ENCODE measurements at regions of chr2 and their contacts with region 1.

Region 1: GRCh38 chr2:143150287-143150686 is 21.1 kb downstream of the ARHGAP15 start:
- DNase-seq: peak in 1 of 35 experiments; percentile 38
- ATAC-seq: peak; percentile 54 to 69 (median 66)
- H3K4me3 ChIP-seq: no peak overlapping the region
- H3K4me3 Mint-ChIP-seq: peak overlapping the region; percentile 25 to 60 (median 57)
- H3K27ac ChIP-seq: peak overlapping the region; percentile 53
- H3K27ac Mint-ChIP-seq: peak overlapping the region; percentile 87 to 95
- H3K4me1 ChIP-seq: peaks cover 41 to 63% of the 10 kb centered on the region in 2 experiments
- H3K4me1 Mint-ChIP-seq: peaks cover 87 to 95% (median 89%) of the 10 kb centered on the region in 3 donors
- H3K27me3 ChIP-seq: no peaks in the 10 kb centered on the region
- H3K27me3 Mint-ChIP-seq: no peaks in the 10 kb centered on the region

Region 2: GRCh38 chr2:142849816-142850215 is 300.5 kb before region 1 on chr2:
- CTCF ChIA-PET with region 1: no interaction called
- POLR2A ChIA-PET with region 1: no interaction called
- DNase-seq: no peak
- ATAC-seq: no peak
- H3K4me3 ChIP-seq: no peak overlapping the region
- H3K4me3 Mint-ChIP-seq: no peak overlapping the region
- H3K27ac ChIP-seq: no peak overlapping the region
- H3K27ac Mint-ChIP-seq: no peak overlapping the region
- H3K4me1 ChIP-seq: no peaks in the 10 kb centered on the region
- H3K4me1 Mint-ChIP-seq: no peaks in the 10 kb centered on the region
- H3K27me3 ChIP-seq: no peaks in the 10 kb centered on the region
- H3K27me3 Mint-ChIP-seq: no peaks in the 10 kb centered on the region

Region 3: DNA sequence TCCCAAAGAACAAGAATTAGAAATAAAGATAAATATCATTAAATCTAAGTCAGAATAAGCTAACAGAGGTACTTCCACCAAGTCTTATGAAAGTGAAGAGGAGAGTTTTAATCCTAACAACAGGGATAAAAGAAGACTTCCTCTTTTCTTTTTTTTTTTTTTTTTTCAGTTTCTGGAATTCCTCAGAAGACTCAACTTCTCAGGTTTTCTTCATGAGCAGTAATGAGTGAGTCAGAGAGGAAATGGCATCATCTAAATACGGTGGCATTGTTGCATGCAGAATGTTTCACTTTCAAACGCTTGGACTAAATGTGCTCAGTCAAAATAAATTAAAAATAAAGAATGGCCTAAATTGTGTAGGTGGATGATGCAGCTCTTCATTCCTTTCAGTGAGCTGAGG is 66.7 kb before region 1 on chr2:
- CTCF ChIA-PET with region 1: no interaction called
- POLR2A ChIA-PET with region 1: no interaction called
- DNase-seq: peak in 1 of 35 experiments; percentile 27
- ATAC-seq: peak in 3 of 4 experiments; percentile 37 to 66 (median 51)
- H3K4me3 ChIP-seq: no peak overlapping the region
- H3K4me3 Mint-ChIP-seq: peak overlapping the region in 1 of 3 donors; percentile 10
- H3K27ac ChIP-seq: no peak overlapping the region
- H3K27ac Mint-ChIP-seq: peak overlapping the region in 1 of 2 donors; percentile 25
- H3K4me1 ChIP-seq: no peaks in the 10 kb centered on the region
- H3K4me1 Mint-ChIP-seq: peaks cover 4 to 25% (median 18%) of the 10 kb centered on the region in 3 donors
- H3K27me3 ChIP-seq: no peaks in the 10 kb centered on the region
- H3K27me3 Mint-ChIP-seq: no peaks in the 10 kb centered on the region

Region 4: DNA sequence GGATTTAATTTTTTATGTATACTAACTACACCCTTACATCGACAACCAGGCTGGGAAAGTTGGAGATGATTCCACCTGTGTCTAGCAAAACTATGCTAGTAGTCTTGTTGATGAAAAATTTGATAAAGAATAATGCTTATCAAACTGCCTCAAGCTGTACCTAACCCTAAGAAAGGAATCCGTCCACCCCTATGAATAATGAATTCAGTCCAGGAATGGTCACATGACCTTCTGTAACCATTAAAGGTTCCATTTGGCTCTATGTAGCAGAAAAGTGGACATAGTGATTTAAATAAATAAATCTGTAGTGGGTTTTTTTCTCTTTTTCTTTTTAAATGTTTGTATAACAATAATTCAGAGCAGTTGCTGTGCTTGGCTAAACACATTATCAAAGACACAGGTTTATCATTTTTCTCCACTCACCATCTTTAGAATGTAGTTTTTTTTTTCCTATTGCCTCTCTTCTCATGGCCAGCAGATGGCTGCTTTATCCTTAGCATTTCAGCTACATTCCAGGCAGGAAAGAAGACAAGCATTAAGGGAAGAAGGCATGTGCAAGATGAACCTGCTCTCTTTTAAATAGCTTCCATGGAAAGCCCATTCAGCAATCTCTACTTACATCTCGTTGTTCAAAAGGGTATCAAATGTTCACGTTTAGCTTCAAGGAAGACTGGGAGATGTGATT is 21.4 kb after region 1 on chr2:
- CTCF ChIA-PET with region 1: interaction called in 1 of 2 experiments, 13 read pairs
- POLR2A ChIA-PET with region 1: no interaction called
- DNase-seq: no peak
- ATAC-seq: no peak
- H3K4me3 ChIP-seq: no peak overlapping the region
- H3K4me3 Mint-ChIP-seq: no peak overlapping the region
- H3K27ac ChIP-seq: no peak overlapping the region
- H3K27ac Mint-ChIP-seq: peak overlapping the region; percentile 69 to 81
- H3K4me1 ChIP-seq: peaks cover 11 to 24% of the 10 kb centered on the region in 2 experiments
- H3K4me1 Mint-ChIP-seq: peaks cover 77 to 85% (median 79%) of the 10 kb centered on the region in 3 donors
- H3K27me3 ChIP-seq: no peaks in the 10 kb centered on the region
- H3K27me3 Mint-ChIP-seq: no peaks in the 10 kb centered on the region

Region 5: DNA sequence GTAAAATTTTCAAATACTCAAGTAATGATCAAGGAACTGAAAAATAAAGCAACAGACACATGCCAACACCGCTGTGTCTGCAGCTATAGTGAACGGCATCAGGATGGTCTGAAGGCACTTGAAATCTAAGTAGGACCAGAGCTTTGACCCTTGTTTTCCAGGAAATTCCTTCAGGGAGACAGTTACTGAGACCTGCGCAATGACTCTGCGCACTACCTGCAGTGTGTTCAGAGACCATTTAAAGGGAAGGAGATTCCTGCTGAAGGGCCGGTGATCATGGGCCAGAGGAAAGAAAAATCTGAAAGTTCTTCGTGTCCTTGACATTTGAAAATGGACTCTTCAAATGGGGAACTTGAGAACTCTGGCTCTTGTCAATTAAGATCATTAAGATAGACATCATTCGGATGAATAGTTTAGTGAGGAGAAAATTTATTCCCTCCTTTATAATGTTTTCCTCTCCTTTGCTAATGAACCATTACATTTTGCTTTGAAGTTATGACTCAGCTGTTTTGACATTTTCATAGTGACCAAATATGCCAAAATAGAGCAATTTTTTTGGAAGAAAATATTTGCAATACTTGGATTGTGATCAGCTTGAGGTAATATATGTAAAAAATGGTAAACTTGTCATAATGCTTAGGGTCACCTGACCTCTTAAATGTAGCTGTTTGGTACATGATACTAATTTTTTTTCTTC is 308.1 kb after region 1 on chr2:
- CTCF ChIA-PET with region 1: interaction called in 1 of 2 experiments, 11 read pairs
- POLR2A ChIA-PET with region 1: no interaction called
- DNase-seq: no peak
- ATAC-seq: no peak
- H3K4me3 ChIP-seq: no peak overlapping the region
- H3K4me3 Mint-ChIP-seq: no peak overlapping the region
- H3K27ac ChIP-seq: no peak overlapping the region
- H3K27ac Mint-ChIP-seq: no peak overlapping the region
- H3K4me1 ChIP-seq: peaks cover 0 to 5% of the 10 kb centered on the region in 2 experiments
- H3K4me1 Mint-ChIP-seq: peaks cover 25 to 28% (median 26%) of the 10 kb centered on the region in 3 donors
- H3K27me3 ChIP-seq: no peaks in the 10 kb centered on the region
- H3K27me3 Mint-ChIP-seq: no peaks in the 10 kb centered on the region